Ascending aorta (tissue), 2 donors: ENCODE measurements at regions of chr2 and their contacts with region 1.

Region 1: GRCh38 chr2:205785507-205786260 is 103.4 kb downstream of the NRP2 start:
- DNase-seq: no peak
- H3K4me3 ChIP-seq: no peak overlapping the region
- H3K27ac ChIP-seq: no peak overlapping the region
- H3K4me1 ChIP-seq: peaks cover 0 to 4% of the 10 kb centered on the region in 2 donors
- H3K27me3 ChIP-seq: no peaks in the 10 kb centered on the region
- CTCF ChIP-seq: no peak

Region 2: GRCh38 chr2:205474741-205475415 is 310.8 kb before region 1 on chr2:
- intact Hi-C with region 1: no loop called
- DNase-seq: no peak
- H3K4me3 ChIP-seq: no peak overlapping the region
- H3K27ac ChIP-seq: no peak overlapping the region
- H3K4me1 ChIP-seq: no peaks in the 10 kb centered on the region
- H3K27me3 ChIP-seq: no peaks in the 10 kb centered on the region
- CTCF ChIP-seq: no peak

Region 3: DNA sequence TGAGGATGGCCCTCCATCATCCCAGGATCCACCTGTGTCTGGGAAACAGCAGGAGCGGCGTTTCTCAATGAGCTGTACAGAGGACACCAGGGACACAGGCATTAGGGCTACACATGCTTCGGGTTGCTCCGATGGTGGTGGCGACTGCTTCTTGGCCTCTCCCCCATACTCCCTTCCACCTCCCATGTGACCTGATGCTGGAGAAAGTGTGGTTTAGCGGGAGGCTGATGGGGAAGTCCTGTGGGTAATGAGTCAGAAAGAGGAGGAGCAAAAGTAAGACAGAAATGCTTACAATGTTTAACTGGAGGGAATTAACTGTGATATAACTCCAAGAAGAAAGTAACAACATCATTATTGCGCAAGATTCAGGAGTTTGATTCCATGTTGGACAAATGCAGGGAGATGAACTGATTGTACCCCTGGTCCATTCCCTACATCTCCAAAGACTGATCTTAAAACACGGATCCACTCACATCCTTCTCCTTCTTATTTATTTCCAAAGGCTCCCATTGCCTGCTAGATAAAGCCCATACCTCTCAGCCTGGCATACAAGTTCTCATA is 83.2 kb after region 1 on chr2:
- intact Hi-C with region 1: loop called (anchors 10 kb)
- DNase-seq: no peak
- H3K4me3 ChIP-seq: no peak overlapping the region
- H3K27ac ChIP-seq: no peak overlapping the region
- H3K4me1 ChIP-seq: no peaks in the 10 kb centered on the region
- H3K27me3 ChIP-seq: no peaks in the 10 kb centered on the region
- CTCF ChIP-seq: no peak